ENCODE measurements at regions of chr20 and their contacts with region 1.

Region 1: DNA sequence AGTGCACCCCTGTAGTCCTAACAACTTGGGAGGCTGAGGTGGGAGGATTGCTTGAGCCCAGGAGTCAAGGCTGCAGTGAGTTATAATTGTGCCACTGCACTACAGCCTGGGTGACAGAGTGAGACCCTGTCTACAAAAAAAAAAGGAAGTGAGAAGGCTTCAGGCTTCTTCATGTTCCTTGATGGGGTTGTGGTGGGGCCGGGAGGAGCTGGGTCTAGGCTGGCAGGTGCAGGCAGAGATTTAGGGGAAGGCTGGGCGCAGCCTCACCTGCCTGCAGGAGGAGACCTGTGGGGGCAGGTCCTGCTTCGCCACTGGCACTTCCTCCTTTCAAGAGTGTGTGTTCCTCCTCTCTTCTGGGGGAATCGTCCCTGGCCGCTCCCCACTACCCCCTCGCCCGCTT is 63.9 kb downstream of the CHMP4B start:
- DNase-seq: peak; percentile 96
- H3K4me3 ChIP-seq: peak overlapping the region; percentile 54
- H3K27ac ChIP-seq: peak overlapping the region; percentile 93
- H3K4me1 ChIP-seq: peaks cover 49% of the 10 kb centered on the region
- CTCF ChIP-seq: no peak

Region 2: DNA sequence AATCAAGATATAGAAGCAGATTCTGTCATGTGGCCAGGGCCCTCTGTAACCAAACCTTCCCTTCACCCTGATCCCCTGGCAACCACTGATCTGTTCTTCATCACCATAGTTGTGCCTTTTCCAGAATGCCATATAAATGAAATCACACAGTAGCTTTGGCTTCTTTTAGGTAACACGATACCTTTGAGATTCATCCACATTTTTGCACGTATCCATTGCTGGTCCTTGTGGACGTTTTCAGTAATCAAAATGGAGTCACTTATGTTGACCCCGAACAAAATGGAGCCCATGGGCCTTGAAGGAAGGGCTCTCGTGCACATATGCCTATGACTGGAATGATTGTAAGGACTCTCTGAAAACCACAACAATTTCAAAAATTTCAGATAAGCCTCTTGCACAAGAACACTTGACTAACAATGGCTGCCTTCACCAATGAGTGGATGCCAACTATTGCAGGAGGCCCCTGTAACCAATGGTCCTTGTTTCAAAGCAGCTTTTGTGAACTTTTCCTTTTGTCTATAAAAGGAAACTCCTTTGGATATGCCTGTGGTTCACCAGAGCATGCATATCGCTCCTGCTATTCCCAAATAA is 34.4 kb after region 1 on chr20:
- CTCF ChIA-PET with region 1: no interaction called
- POLR2A ChIA-PET with region 1: interaction called, 12 read pairs
- intact Hi-C with region 1: loop called (anchors 2 kb)
- DNase-seq: no peak
- H3K4me3 ChIP-seq: no peak overlapping the region
- H3K27ac ChIP-seq: peak overlapping the region; percentile 89
- H3K4me1 ChIP-seq: peaks cover 54% of the 10 kb centered on the region
- CTCF ChIP-seq: no peak

Region 3: DNA sequence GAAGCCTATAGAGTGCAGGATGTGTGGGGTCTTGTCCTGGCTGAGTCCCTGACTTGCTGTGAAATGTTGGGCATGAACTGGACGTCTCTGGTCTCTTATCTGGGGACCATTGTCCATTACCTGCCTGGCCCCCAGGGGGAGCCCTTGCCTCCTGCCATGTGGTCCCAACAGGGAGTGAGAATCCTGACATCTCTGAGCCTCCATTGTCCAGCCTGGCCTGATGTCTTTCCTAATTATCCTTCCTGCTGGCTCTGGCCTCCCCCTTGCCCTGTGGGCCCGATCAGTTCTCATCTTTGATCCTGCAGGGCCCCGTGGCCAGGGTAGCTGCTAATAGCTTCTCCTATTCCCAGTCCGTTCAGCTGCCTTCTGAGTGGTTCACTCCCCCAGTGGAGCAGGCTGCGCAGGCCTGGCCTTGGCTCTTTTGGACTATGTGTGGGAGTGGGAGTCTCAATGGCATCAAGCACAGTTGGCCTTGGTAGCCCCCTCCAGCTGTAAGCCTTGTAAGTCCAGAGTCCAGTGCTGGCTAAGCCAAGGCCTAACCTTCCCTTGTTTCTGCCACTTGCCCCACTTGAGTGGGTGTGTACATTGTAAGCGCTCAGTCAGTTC is 40.8 kb after region 1 on chr20:
- CTCF ChIA-PET with region 1: no interaction called
- POLR2A ChIA-PET with region 1: interaction called, 12 read pairs
- intact Hi-C with region 1: loop called (anchors 2 kb)
- DNase-seq: peak; percentile 58
- H3K4me3 ChIP-seq: no peak overlapping the region
- H3K27ac ChIP-seq: peak overlapping the region; percentile 74
- H3K4me1 ChIP-seq: peaks cover 83% of the 10 kb centered on the region
- CTCF ChIP-seq: peak; percentile 89

Region 4: DNA sequence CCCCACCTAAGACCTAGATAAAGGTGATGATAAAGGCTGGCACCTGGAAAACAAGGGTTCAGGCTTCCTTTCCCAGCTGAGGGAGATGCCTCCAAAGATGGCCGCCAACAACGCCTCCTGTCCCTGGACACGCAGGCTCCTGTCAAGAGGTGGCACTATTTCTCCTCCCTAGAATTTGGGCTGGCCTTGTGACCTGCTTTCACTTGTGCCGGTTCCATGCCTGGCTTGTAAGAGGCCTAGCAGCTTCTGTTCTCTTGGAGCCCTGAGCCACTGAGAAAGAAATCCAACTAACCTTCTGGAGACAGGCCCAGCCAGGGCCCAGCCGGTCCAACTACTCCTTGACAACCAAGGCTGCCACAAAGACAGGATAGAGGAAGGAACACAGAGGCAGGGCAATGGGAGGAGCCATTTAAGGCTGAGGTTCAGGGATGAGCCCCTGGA is 58.4 kb after region 1 on chr20:
- CTCF ChIA-PET with region 1: no interaction called
- POLR2A ChIA-PET with region 1: no interaction called
- intact Hi-C with region 1: no loop called
- DNase-seq: peak; percentile 35
- H3K4me3 ChIP-seq: no peak overlapping the region
- H3K27ac ChIP-seq: no peak overlapping the region
- H3K4me1 ChIP-seq: peaks cover 6% of the 10 kb centered on the region
- CTCF ChIP-seq: peak; percentile 57

Region 5: GRCh38 chr20:33992923-33993575 is 118.0 kb after region 1 on chr20:
- CTCF ChIA-PET with region 1: no interaction called
- POLR2A ChIA-PET with region 1: interaction called, 6 read pairs
- intact Hi-C with region 1: loop called (anchors 2 kb)
- DNase-seq: peak; percentile 98
- H3K4me3 ChIP-seq: peak overlapping the region; percentile 99
- H3K27ac ChIP-seq: peak overlapping the region; percentile 78
- H3K4me1 ChIP-seq: peaks cover 42% of the 10 kb centered on the region
- CTCF ChIP-seq: no peak; the same call in 1 of the 2 replicates

Measured in OCI-LY7 (cell line).